ENCODE measurements at regions of chr5 and their contacts with region 1.

Region 1: GRCh38 chr5:122415030-122415800 is 103.2 kb downstream of the SNCAIP start:
- DNase-seq: peak; percentile 80
- ATAC-seq: peak; percentile 97
- H3K4me3 ChIP-seq: no peak overlapping the region
- H3K27ac ChIP-seq: no peak overlapping the region
- H3K4me1 ChIP-seq: peaks cover 9% of the 10 kb centered on the region
- H3K27me3 ChIP-seq: no peaks in the 10 kb centered on the region
- CTCF ChIP-seq: peak; percentile 85
- POLR2A ChIP-seq: no peak
- RAD21 ChIP-seq: peak; percentile 87

Region 2: DNA sequence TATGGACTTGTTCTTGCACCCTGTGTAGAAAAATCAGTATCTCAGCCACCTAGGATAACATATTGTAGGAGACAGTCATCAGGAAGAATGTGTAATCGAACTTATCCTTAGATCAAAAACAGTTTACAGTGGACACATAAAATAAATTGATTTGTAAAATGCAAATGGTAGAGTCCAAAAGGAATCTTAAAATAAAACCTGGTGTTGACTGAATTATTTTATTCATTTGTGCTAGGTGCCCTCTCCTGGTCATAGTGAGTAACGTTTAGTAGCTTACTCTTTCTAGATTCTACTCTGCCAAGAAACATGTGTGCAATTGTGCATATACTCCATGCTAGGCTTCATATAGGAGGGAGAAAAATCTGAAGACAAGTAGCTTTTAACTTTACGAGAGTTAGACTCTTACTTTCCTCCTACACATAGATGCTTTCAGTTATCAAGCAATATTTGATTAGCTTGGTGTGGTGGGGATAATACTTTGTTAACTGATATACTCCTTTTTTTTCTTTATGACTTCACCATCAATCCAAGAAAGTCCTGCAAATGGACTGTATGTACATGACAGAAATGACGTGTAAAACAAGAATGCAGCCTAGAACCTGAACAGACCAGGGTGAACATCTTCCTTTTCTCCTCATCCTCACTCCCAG is 313.5 kb before region 1 on chr5:
- CTCF ChIA-PET with region 1: no interaction called
- POLR2A ChIA-PET with region 1: no interaction called
- dilution Hi-C with region 1: no loop called
- in situ Hi-C with region 1: no loop called
- intact Hi-C with region 1: loop called (anchors 5 kb)
- DNase-seq: peak; percentile 79
- ATAC-seq: peak; percentile 79
- H3K4me3 ChIP-seq: no peak overlapping the region
- H3K27ac ChIP-seq: no peak overlapping the region
- H3K4me1 ChIP-seq: peaks cover 5% of the 10 kb centered on the region
- H3K27me3 ChIP-seq: no peaks in the 10 kb centered on the region
- CTCF ChIP-seq: peak; percentile 72
- POLR2A ChIP-seq: no peak
- RAD21 ChIP-seq: peak; percentile 74

Region 3: DNA sequence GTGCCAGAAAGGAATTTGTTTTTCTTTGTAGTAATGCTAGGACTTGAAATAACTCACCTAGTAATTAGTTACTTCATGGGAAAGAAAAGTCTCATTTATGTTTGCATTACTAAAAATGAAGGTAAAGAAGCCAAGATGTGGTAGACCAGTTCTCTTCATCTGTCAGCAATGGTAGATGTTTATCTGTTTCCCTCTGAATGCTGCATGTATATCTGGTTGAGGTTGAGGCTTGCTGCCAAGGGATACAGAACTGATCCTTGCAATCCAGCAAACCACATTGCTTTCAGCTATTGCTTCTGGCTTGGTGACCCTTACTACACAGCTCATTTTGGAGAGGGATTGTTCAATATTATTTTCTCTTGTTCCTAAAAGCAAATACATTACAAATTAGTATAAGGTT is 212.3 kb before region 1 on chr5:
- CTCF ChIA-PET with region 1: interaction called, 11 read pairs
- POLR2A ChIA-PET with region 1: no interaction called
- dilution Hi-C with region 1: loop called (anchors 25 kb)
- in situ Hi-C with region 1: loop called (anchors 5 kb)
- intact Hi-C with region 1: no loop called
- DNase-seq: peak; percentile 36
- ATAC-seq: peak; percentile 51; the same call in 1 of the 2 replicates
- H3K4me3 ChIP-seq: no peak overlapping the region
- H3K27ac ChIP-seq: no peak overlapping the region
- H3K4me1 ChIP-seq: no peaks in the 10 kb centered on the region
- H3K27me3 ChIP-seq: peaks cover 7% of the 10 kb centered on the region
- CTCF ChIP-seq: no peak
- POLR2A ChIP-seq: no peak
- RAD21 ChIP-seq: no peak

Region 4: DNA sequence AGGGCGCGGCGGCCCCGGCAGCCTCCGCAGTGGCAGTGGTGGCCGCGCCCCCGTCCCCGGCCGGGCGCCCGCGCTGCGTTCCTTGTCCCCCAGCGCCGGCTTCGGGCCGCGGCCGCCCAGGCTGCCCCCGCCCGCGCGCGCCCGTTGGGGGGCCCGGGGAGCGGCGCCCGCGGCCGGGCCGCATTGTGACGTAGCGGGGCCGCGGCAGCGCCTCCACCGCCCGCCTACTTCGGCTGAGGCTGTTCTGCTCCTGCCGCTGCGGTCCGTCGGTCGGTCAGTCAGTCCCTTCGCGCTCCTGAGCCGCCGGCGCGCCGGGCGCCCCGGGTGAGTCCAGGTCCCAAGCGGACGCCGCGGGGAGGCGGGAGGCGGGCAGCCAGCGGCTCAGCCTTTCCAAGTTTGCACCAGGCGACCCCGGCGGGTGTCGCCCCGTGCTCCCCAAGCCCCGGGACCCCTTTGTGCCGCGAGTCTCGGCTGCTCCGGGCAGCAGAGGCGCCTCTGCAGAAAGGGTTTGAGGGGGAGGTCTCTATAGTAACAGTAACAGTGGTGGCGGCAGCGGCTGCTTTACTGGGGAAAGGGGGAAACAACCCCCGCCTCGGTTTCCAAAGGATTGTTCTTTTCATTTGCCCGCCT is 103.1 kb before region 1 on chr5 and contains the start of gene SNCAIP:
- CTCF ChIA-PET with region 1: no interaction called
- POLR2A ChIA-PET with region 1: no interaction called
- dilution Hi-C with region 1: no loop called
- in situ Hi-C with region 1: no loop called
- intact Hi-C with region 1: loop called (anchors 5 kb)
- DNase-seq: peak; percentile 64
- ATAC-seq: peak; percentile 89
- H3K4me3 ChIP-seq: peak within 1 kb of the TSS; percentile 54
- H3K27ac ChIP-seq: peak within 1 kb of the TSS; percentile 53
- H3K4me1 ChIP-seq: peaks cover 4% of the 10 kb centered on the region; the same call in 1 of the 2 replicates
- H3K27me3 ChIP-seq: no peaks in the 10 kb centered on the region
- CTCF ChIP-seq: no peak
- POLR2A ChIP-seq: no peak
- RAD21 ChIP-seq: no peak
- total RNA-seq, gene SNCAIP: 19.0 and 22.5 TPM in 2 replicates

Measured in IMR-90 (cell line).